AG04450 (cell line): ENCODE measurements at regions of chr3 and their contacts with region 1.

Region 1: GRCh38 chr3:108662130-108662738 is 72.7 kb downstream of the DZIP3 start:
- DNase-seq: peak; percentile 63
- H3K4me3 ChIP-seq: no peak overlapping the region
- H3K27ac ChIP-seq: no peak overlapping the region
- H3K27me3 ChIP-seq: no peaks in the 10 kb centered on the region
- CTCF ChIP-seq: peak; percentile 72

Region 2: DNA sequence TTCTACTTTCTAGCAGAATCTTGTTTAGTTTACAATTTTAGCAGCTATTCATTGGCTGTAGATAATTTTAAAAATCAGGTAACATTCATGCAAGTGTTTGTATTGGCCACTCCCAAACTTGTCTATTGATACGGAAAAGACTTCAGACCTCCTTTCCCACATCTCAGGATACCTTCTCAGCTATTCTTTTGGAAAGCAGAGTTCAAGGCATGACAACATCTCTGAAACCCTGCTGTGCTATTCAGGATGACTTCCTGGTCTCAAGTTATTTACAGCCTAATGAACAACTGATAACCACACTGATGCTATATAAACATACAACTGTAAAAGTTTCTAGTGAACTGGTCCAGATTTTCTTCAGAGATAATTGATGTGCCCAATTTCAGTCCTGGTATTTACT is 16.9 kb before region 1 on chr3:
- CTCF ChIA-PET with region 1: interaction called, 24 read pairs
- POLR2A ChIA-PET with region 1: no interaction called
- DNase-seq: no peak
- H3K4me3 ChIP-seq: no peak overlapping the region
- H3K27ac ChIP-seq: no peak overlapping the region
- H3K27me3 ChIP-seq: no peaks in the 10 kb centered on the region
- CTCF ChIP-seq: no peak